ENCODE measurements at regions of chr11 and their contacts with region 1.

Region 1: GRCh38 chr11:75248690-75249268 is 8.2 kb downstream of the TPBGL start:
- DNase-seq: peak; percentile 90 to 96 (median 95)
- ATAC-seq: peak; percentile 90 to 91
- H3K4me3 ChIP-seq: no peak overlapping the region
- H3K27ac ChIP-seq: no peak overlapping the region
- H3K4me1 ChIP-seq: no peaks in the 10 kb centered on the region
- H3K27me3 ChIP-seq: no peaks in the 10 kb centered on the region

Region 2: DNA sequence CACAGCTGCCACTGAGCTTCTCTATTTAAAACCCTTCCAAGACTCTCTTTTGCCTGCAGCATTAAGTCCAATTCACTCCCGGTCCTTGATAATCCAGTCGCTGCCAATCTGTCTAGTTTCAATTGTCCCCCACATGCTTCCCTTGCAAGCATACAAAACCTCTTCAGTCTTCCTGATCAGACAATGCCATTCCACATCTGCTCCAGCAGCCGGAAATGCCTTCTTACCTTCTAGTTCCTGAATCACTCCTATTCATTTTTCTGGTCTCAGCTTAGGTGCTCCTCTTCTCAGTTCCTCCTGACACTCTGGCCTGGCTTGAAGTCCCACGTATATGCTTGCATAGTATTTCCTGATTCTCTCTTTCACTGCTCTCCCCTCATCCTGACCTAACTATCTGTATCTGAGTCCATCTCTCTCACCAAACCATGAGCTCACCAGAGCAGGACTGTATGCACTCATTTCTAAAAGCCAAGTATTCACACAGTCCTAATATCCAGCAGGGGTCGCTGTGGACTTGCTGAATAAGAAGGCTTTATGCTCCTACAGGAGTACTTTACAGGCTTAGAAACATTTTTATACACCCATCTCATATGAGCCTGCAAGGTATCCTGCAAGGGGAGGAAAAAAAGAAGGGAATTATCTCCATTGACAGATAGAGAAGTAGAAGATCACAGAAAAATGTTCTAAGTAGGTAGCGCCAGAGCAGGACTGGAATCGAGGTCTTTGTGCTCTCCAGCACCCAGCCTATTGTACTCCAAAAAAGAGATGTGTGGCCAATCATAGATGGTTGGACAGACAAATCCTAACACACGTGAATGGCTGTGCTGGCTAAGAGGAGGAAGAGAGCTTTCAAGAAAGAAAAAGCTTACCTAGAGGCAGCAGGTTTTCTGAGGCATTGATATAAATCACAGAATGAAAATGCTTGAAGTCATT is 319.1 kb before region 1 on chr11:
- intact Hi-C with region 1: loop called in 3 of 4 experiments (anchors 5 to 10 kb)
- DNase-seq: peak in 2 of 3 donors; percentile 53 to 79
- ATAC-seq: peak; percentile 85 to 87
- H3K4me3 ChIP-seq: no peak overlapping the region
- H3K27ac ChIP-seq: no peak overlapping the region
- H3K4me1 ChIP-seq: no peaks in the 10 kb centered on the region
- H3K27me3 ChIP-seq: no peaks in the 10 kb centered on the region

Region 3: DNA sequence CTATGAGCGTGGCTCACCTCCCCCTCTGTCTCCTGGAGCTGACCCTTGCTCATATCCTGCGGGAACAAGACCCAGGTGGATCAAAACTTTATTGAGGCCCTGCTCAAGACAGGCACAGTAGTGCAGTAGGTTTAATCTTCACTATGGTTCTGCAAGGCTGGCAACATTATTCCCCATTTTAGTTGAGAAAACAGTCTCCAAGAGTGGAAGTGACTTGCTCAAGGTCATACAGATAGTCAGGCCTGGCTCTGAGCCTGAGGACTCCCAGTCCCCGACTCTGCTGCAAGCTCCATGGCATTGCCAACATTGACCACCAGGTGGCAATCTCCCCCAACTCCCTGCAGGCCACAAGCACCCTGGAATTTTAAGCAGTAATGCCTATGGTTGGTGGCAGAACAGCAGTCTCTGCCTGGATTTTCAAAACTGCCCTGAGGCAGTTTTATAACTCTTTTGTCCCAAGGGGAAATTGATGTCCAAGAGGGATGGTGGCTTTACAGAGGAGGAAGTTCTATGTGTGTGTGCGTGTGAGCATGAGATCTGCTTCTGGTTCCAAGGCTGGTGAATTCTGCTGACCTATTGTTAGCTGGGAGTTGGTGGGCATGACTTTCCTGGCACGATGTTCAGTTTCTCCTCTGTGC is 225.9 kb before region 1 on chr11:
- intact Hi-C with region 1: loop called in 3 of 4 experiments (anchors 5 to 10 kb)
- DNase-seq: peak; percentile 72 to 90 (median 87)
- ATAC-seq: peak; percentile 79 to 91
- H3K4me3 ChIP-seq: no peak overlapping the region
- H3K27ac ChIP-seq: peak overlapping the region; percentile 25
- H3K4me1 ChIP-seq: peaks cover 2% of the 10 kb centered on the region
- H3K27me3 ChIP-seq: no peaks in the 10 kb centered on the region

Region 4: GRCh38 chr11:75142714-75143419 is 105.9 kb before region 1 on chr11:
- intact Hi-C with region 1: loop called in 3 of 4 experiments (anchors 2 to 5 kb)
- DNase-seq: peak; percentile 80 to 90 (median 87)
- ATAC-seq: peak; percentile 85 to 95
- H3K4me3 ChIP-seq: no peak overlapping the region
- H3K27ac ChIP-seq: no peak overlapping the region
- H3K4me1 ChIP-seq: peaks cover 3% of the 10 kb centered on the region
- H3K27me3 ChIP-seq: no peaks in the 10 kb centered on the region

Measured in right cardiac atrium (tissue), 5 donors.